Transverse colon (tissue), 4 donors: ENCODE measurements at regions of chr17 and their contacts with region 1.

Region 1: DNA sequence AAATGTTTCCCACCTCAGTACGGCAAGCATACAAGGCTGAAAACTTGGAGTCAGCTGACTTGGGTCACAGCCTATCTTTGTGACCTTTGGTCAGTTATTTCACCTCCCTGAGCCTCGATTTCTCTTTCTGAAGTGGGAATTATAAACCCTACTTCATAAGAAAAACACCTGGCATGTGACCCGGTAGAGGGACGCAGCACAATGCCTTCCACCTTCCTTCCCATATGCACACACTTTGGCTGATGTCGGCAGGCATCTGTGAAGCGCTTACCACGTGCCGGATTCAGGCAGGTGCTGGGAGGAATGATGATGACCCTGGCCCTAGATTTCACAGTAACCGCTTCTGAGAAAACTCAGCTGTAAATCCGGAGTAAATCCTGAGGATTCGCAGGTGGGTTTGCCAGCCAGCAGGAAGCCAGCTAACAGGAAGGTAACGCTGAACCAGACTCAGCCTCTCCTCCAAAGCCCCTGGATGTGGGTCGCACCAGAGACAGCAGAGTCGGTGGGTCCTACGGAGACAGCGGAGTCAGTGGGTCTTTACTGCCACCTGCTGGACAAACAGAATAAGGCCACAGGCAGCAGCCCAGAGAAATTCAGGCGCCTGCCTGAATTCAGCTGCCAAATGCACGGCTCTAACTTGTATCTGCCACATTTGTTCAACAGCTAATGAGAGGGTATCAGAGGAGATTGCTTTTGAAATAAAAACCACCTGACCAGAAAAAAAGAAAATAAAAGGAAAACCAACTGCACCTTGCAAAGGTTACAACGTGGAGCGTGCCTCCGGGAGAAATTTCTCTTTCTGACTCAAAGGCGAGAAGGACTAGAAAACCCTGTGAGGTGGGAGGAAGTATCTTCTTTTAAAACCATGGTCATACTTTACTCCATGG is 16.6 kb downstream of the COPRS start:
- DNase-seq: peak; percentile 78
- H3K4me3 ChIP-seq: peak overlapping the region in 1 of 4 donors; percentile 36
- H3K27ac ChIP-seq: peak overlapping the region; percentile 59 to 84 (median 65)
- H3K4me1 ChIP-seq: peaks cover 14 to 25% (median 18%) of the 10 kb centered on the region in 4 donors
- H3K27me3 ChIP-seq: no peaks in the 10 kb centered on the region
- CTCF ChIP-seq: peak; percentile 95 to 99 (median 98)
- EP300 ChIP-seq: no peak
- POLR2A ChIP-seq: no peak

Region 2: DNA sequence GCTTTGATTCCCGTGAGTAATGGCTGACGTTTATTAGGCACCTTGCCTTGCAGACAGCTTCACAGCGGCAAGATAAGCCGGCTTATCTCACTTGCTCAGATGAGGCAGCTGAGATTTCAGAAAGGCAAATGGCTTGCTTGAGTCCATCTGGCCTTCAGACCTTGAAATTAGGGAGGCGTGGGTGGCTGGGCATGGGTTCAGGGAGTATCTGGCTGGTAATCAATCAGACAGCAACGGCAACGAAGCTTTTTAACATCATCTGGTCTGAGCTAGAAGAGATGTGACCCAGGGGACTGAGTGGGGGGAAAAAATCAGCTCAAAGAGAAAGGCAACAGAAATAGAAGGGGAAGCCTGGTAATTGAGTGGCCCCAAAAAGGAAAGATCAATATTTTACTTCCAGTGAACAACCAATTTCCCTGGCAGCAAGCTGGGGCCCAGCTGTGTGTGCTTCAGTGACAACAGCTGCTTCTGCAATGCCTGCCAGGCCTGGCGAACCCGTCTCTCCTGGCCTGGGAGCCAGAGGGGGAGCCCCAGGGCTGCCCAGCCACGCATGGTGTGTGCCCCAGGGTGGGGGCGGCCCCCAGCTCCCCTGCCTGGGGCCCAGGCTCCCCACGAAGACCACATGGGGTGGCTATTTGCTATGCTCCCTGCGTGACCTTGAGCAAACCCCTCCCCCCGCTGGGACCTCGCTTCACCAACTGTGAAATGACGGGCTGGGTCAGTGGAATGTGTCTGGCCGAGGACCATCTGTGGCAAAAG is 417.0 kb before region 1 on chr17:
- in situ Hi-C with region 1: loop called (anchors 10 to 25 kb)
- intact Hi-C with region 1: no loop called
- DNase-seq: no peak
- H3K4me3 ChIP-seq: no peak overlapping the region
- H3K27ac ChIP-seq: no peak overlapping the region
- H3K4me1 ChIP-seq: peaks cover 0 to 2% (median 0%) of the 10 kb centered on the region in 4 donors
- H3K27me3 ChIP-seq: no peaks in the 10 kb centered on the region
- CTCF ChIP-seq: no peak
- EP300 ChIP-seq: no peak
- POLR2A ChIP-seq: no peak

Region 3: DNA sequence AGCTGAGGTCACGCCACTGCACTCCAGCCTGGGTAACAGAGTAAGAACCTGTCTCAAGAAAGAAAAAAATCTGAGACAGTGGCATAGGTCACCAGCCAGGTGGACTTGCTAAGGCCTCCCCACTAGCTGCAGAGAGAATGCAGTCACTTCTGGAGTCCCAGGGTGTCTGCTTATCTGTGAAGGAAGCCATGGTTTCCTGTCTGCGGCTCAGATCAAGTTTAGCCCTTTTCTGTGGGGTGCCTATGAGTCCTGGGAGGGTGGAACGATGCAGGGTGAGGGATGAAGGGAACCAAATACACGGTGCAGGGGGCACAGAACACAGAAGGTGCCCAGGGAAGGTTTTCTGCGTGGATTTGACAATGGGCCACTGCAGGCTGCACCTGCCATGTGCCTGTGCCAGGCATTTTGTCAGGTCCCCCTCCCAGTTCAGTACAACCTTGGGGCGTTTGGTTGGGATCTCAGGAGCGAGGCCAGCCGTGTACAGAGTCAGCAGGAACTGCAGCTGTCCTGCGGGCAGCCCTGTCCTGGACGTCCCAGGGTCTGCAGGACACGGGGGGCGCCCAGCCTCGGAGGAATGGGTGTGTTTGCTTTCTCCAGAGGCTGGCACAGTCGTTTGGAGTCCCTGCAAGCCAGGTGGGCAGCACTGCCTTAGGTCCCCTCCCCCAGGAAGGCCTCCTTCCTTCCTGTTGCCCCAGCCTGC is 409.2 kb before region 1 on chr17:
- in situ Hi-C with region 1: loop called (anchors 10 to 25 kb)
- intact Hi-C with region 1: no loop called
- DNase-seq: no peak
- H3K4me3 ChIP-seq: no peak overlapping the region
- H3K27ac ChIP-seq: no peak overlapping the region
- H3K4me1 ChIP-seq: peaks cover 0 to 7% (median 3%) of the 10 kb centered on the region in 4 donors
- H3K27me3 ChIP-seq: peaks cover 4% of the 10 kb centered on the region
- CTCF ChIP-seq: no peak
- EP300 ChIP-seq: no peak
- POLR2A ChIP-seq: no peak

Region 4: DNA sequence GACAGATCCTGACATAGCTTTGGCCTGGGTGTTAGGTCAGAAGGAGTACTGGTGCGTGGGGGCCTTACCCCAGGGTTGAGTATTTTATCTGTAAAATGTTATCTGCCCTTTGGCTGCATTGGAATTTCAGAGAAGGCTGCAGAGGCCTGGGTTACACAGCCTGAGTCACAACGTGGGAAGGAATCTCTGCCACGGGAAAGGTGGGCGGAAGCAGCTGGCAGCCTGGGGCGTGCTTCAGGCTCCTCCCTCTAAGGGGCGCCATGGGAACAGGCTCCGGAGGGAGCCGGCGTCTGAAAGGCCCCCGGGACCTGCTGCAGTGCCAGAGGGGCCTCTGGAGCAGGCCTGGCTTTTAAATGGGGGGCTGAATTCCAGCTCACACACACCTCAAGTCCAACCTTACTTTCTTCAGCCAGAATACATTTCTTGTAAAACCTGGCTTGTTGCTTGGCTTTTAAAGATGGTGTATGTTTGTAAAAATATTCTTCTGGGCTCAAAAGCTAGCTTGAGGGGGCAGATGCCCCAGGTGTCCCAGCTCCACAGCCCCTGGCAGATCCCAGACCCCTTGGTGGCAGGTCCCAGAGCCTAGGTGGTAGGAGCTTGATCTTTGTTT is 308.8 kb before region 1 on chr17:
- in situ Hi-C with region 1: loop called in 1 of 4 experiments (anchors 10 kb)
- intact Hi-C with region 1: no loop called
- DNase-seq: no peak
- H3K4me3 ChIP-seq: no peak overlapping the region
- H3K27ac ChIP-seq: no peak overlapping the region
- H3K4me1 ChIP-seq: peaks cover 0 to 5% (median 0%) of the 10 kb centered on the region in 4 donors
- H3K27me3 ChIP-seq: no peaks in the 10 kb centered on the region
- CTCF ChIP-seq: peak in 1 of 5 experiments; percentile 16
- EP300 ChIP-seq: no peak
- POLR2A ChIP-seq: no peak

Region 5: DNA sequence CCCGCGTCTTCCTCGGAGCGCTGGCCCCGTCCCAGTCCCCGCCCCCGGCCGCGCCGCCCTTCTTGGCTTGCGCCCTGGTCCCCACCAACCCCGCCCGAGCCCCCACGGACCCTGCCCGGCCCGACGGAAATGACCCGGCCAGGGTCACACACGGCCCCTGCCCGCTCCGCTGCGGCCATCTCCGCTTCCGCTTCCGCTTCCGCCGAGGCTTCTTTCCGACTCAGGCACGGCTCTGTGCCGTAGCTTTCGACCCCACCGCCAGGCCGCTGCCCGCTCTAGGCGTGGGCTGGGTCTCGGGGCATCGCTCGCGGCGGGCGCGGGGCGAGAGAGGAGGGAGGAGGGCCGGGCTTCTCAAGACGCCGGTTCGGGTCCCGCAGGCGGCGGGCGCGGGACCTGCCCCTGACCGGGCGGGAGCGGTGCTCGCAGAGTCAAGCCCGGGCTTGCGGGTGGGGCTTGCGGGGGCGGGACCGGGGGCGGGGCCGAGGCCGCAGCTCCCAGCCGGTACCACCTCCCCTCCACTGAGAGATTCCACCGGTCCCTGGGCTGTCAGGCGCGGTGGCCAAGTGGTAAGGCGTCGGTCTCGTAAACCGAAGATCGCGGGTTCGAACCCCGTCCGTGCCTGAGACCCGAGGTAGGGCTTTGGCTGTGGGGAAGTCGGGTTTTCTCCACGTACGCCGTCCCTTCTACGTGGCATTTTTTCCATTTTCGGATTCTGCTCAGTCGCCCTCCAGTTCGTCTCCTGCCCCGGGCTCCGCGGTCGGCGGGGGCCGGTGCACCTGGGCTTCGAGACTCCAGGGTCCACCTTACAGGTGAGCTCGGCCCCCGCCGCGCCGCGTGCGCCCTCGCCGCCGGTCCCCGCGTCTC is 292.7 kb before region 1 on chr17:
- in situ Hi-C with region 1: loop called in 1 of 4 experiments (anchors 10 kb)
- intact Hi-C with region 1: loop called (anchors 2 kb)
- DNase-seq: peak; percentile 95
- H3K4me3 ChIP-seq: peak overlapping the region; percentile 72 to 89 (median 86)
- H3K27ac ChIP-seq: peak overlapping the region; percentile 85 to 94 (median 92)
- H3K4me1 ChIP-seq: peaks cover 0 to 13% (median 4%) of the 10 kb centered on the region in 4 donors
- H3K27me3 ChIP-seq: no peaks in the 10 kb centered on the region
- CTCF ChIP-seq: peak in 1 of 5 experiments; percentile 30
- EP300 ChIP-seq: no peak
- POLR2A ChIP-seq: peak; percentile 74

Region 6: DNA sequence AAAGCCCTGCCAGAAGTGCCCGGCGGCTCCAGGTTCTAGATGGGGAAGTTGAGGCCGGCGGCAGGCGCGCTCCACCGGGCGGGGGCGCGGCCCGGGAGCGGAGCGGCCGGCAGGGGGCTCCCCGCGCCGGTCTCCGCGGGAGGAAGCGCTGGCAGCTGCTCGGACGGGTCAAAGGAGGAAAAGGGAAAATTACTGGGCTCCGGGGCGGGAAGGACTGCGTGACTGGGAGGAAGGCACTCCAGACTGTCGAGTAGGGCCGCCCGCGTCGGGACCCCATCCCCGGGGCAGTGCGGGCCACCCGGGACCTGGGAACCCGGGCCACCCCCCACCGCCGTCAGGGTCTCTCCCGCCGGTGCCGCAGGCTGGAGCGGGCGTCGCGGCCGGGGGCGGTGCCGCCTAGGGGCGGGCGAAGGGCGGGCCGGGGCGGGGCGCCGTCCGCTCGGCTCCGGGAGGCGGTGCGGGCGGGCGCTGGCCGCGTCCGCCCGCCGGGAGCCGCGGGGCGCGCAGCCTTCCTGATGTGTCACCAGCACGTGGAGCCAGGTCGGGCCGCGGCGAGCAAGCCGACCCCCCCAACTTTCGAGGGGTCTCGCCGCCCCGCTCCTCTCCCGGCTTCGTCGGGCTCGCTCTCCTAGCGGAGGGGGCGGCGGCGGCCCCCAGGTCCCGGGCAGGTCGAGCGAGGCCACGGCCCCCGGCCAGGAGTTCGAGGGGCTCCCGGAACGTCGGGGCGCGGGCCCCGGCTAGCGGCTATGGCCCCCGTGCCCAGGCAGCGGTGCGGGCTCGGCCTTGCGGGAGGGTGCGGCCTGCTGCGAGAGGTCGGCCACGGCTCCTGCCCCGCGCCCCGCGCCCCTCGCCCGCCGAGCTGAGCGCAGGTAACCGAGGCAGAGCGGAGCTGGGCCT is 283.4 kb before region 1 on chr17:
- in situ Hi-C with region 1: loop called in 3 of 4 experiments (anchors 5 to 10 kb)
- intact Hi-C with region 1: no loop called
- DNase-seq: peak; percentile 81
- H3K4me3 ChIP-seq: peak overlapping the region; percentile 52 to 77 (median 63)
- H3K27ac ChIP-seq: peak overlapping the region; percentile 89 to 97 (median 91)
- H3K4me1 ChIP-seq: peaks cover 15 to 42% (median 32%) of the 10 kb centered on the region in 4 donors
- H3K27me3 ChIP-seq: no peaks in the 10 kb centered on the region
- CTCF ChIP-seq: peak; percentile 34 to 86 (median 73)
- EP300 ChIP-seq: no peak
- POLR2A ChIP-seq: peak; percentile 26